PC-3 (cell line): ENCODE measurements at regions of chr2 and their contacts with region 1.

Region 1: GRCh38 chr2:65169760-65170136 is 39.8 kb upstream of the RAB1A start:
- DNase-seq: no peak
- ATAC-seq: no peak; the same call in 1 of the 2 replicates
- H3K4me3 ChIP-seq: no peak overlapping the region
- H3K27ac ChIP-seq: no peak overlapping the region
- H3K4me1 ChIP-seq: peaks cover 9% of the 10 kb centered on the region; the same call in 1 of the 2 replicates
- H3K27me3 ChIP-seq: no peaks in the 10 kb centered on the region
- CTCF ChIP-seq: no peak

Region 2: GRCh38 chr2:65186872-65187851 is 17.4 kb after region 1 on chr2:
- CTCF ChIA-PET with region 1: interaction called, 8 read pairs
- POLR2A ChIA-PET with region 1: no interaction called
- intact Hi-C with region 1: loop called (anchors 2 kb)
- DNase-seq: peak; percentile 90
- ATAC-seq: peak; percentile 81
- H3K4me3 ChIP-seq: peak overlapping the region; percentile 29; the same call in 1 of the 2 replicates
- H3K27ac ChIP-seq: peak overlapping the region; percentile 49
- H3K4me1 ChIP-seq: peaks cover 18% of the 10 kb centered on the region
- H3K27me3 ChIP-seq: no peaks in the 10 kb centered on the region
- CTCF ChIP-seq: peak; percentile 91

Region 3: GRCh38 chr2:65204461-65205210 is 34.9 kb after region 1 on chr2:
- CTCF ChIA-PET with region 1: no interaction called
- POLR2A ChIA-PET with region 1: no interaction called
- intact Hi-C with region 1: no loop called
- DNase-seq: no peak
- ATAC-seq: no peak
- H3K4me3 ChIP-seq: no peak overlapping the region
- H3K27ac ChIP-seq: no peak overlapping the region
- H3K4me1 ChIP-seq: no peaks in the 10 kb centered on the region
- H3K27me3 ChIP-seq: no peaks in the 10 kb centered on the region
- CTCF ChIP-seq: no peak

Region 4: GRCh38 chr2:65377556-65378192 is 207.9 kb after region 1 on chr2:
- CTCF ChIA-PET with region 1: no interaction called
- POLR2A ChIA-PET with region 1: no interaction called
- intact Hi-C with region 1: no loop called
- DNase-seq: peak; percentile 90
- ATAC-seq: peak; percentile 65
- H3K4me3 ChIP-seq: 0 out of 2 replicates have a peak overlapping the region, but pooled peaks have one; percentile 0
- H3K27ac ChIP-seq: peak overlapping the region; percentile 76
- H3K4me1 ChIP-seq: peaks cover 85% of the 10 kb centered on the region
- H3K27me3 ChIP-seq: no peaks in the 10 kb centered on the region
- CTCF ChIP-seq: no peak